ENCODE measurements at regions of chr11 and their contacts with region 1.

Region 1: DNA sequence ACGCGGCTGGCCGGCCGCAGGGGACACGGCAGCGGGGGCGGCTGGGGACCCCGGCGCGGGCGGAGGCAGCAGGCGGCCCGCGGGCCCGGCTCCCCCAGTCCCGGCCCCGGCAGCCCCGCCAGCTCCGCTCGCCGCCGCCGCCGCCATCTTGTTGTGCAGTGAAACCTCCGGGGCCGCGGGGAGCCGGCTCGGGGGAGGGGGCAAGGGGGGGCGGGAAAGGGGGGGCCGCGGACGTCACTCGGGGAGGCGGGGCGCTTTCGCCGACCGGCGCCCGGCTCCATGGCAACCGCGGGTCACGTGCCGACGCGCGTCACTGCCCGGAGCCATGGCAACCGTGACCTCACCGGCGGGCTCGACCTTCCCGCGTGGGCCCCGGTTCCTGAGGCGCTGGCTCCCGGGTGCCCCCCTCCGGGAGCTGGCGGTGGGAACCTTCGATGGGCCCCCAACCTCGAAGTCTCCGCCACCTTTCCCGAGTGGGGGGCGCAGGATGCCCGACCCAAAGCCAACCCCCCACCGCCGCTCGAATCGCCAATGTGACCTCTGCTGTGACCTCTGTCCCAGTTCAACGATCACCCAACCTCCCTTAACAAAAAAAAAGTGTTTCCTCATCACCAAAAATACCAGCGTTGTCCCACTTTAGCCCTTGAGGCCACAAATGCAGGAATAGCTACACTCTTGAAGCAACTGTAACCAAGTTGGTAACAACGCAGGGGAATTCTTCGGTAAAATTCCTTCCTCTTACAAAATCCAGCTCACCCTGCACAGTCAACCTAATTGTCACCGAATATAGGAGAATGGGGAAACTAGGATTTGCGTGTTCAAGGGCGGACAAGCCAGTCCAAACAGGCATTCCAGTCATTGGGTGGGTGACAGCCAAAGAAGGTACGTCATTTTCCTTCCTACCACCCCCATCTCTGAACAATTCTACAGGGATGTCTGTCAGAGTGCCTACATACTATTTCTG is at the start of gene SIK3:
- DNase-seq: peak; percentile 96 to 98
- ATAC-seq: peak; percentile 73 to 90 (median 84)
- H3K4me3 ChIP-seq: peak within 1 kb of the TSS; percentile 90
- H3K4me3 Mint-ChIP-seq: peak within 1 kb of the TSS; percentile 97
- H3K27ac ChIP-seq: peak within 1 kb of the TSS; percentile 94
- H3K27ac Mint-ChIP-seq: peak within 1 kb of the TSS; percentile 98
- H3K4me1 ChIP-seq: peaks cover 47% of the 10 kb centered on the region
- H3K4me1 Mint-ChIP-seq: peaks cover 64 to 65% of the 10 kb centered on the region in 2 donors
- H3K27me3 ChIP-seq: no peaks in the 10 kb centered on the region
- H3K27me3 Mint-ChIP-seq: no peaks in the 10 kb centered on the region
- CTCF ChIP-seq: peak; percentile 35
- total RNA-seq, gene SIK3: 71.6 to 120 (median 119) TPM

Region 2: GRCh38 chr11:116930177-116930576 is 168.4 kb before region 1 on chr11:
- intact Hi-C with region 1: loop called (anchors 2 kb)
- DNase-seq: peak in 1 of 2 donors; percentile 72
- ATAC-seq: peak; percentile 33 to 66 (median 61)
- H3K4me3 ChIP-seq: peak overlapping the region; percentile 15
- H3K4me3 Mint-ChIP-seq: peak overlapping the region; percentile 79
- H3K27ac ChIP-seq: peak overlapping the region; percentile 95
- H3K27ac Mint-ChIP-seq: peak overlapping the region; percentile 85 to 91
- H3K4me1 ChIP-seq: peaks cover 58% of the 10 kb centered on the region
- H3K4me1 Mint-ChIP-seq: peaks cover 72 to 83% of the 10 kb centered on the region in 2 donors
- H3K27me3 ChIP-seq: no peaks in the 10 kb centered on the region
- H3K27me3 Mint-ChIP-seq: no peaks in the 10 kb centered on the region
- CTCF ChIP-seq: no peak

Region 3: DNA sequence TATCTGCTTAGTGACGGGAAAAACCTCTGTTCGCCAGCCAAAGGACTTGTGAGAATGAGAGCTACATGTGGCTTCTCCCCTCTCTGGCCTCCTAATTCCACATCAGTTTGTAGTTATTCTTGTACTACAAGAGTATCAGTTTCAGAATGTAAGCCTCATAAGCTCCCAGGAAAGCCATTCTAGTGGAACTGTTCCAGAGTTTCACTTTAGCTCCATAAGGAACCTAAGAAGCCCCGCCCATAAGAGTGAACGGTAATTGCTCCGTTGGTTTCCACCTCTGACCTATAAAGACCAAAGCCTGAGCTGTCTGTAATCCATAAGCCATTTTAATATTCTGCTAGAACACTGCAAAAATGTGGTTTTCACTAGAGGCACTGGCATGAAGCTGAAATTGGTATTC is 53.4 kb before region 1 on chr11:
- intact Hi-C with region 1: loop called (anchors 10 kb)
- DNase-seq: no peak
- ATAC-seq: no peak
- H3K4me3 ChIP-seq: no peak overlapping the region
- H3K4me3 Mint-ChIP-seq: no peak overlapping the region
- H3K27ac ChIP-seq: no peak overlapping the region
- H3K27ac Mint-ChIP-seq: peak overlapping the region; percentile 20 to 67
- H3K4me1 ChIP-seq: peaks cover 3% of the 10 kb centered on the region
- H3K4me1 Mint-ChIP-seq: peaks cover 45 to 56% of the 10 kb centered on the region in 2 donors
- H3K27me3 ChIP-seq: no peaks in the 10 kb centered on the region
- H3K27me3 Mint-ChIP-seq: no peaks in the 10 kb centered on the region
- CTCF ChIP-seq: no peak

Region 4: GRCh38 chr11:117143871-117144476 is 45.4 kb after region 1 on chr11 and contains the start of gene PAFAH1B2:
- intact Hi-C with region 1: loop called (anchors 2 kb)
- DNase-seq: peak; percentile 90 to 97
- ATAC-seq: peak; percentile 87 to 96 (median 93)
- H3K4me3 ChIP-seq: peak within 1 kb of the TSS; percentile 74
- H3K4me3 Mint-ChIP-seq: peak within 1 kb of the TSS; percentile 100
- H3K27ac ChIP-seq: peak within 1 kb of the TSS; percentile 74
- H3K27ac Mint-ChIP-seq: peak within 1 kb of the TSS; percentile 89 to 93
- H3K4me1 ChIP-seq: peaks cover 24% of the 10 kb centered on the region
- H3K4me1 Mint-ChIP-seq: peaks cover 32 to 36% of the 10 kb centered on the region in 2 donors
- H3K27me3 ChIP-seq: no peaks in the 10 kb centered on the region
- H3K27me3 Mint-ChIP-seq: peaks cover 12 to 30% of the 10 kb centered on the region in 2 donors
- CTCF ChIP-seq: no peak
- total RNA-seq, gene PAFAH1B2: 46.1 to 71.0 (median 58.8) TPM

Region 5: DNA sequence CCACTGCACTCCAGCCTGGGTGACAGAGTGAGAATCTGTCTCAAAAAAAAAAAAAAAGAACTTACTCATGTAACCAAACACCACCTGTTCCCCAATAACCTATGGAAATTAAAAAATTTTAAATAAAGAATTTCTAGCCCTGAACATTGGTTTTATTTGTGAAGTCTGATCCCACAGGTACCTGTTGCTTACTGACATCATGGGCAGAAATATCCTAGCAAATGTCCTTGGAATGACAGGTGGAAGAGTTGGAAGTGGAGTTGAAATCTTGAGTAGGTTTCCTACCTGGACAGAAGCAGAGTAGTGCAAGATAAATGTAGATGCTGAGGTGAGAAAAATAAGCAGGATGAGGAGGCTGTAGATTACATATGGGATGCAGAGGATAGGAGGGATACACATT is 1226.7 kb after region 1 on chr11:
- intact Hi-C with region 1: no loop called
- DNase-seq: no peak
- ATAC-seq: no peak
- H3K4me3 ChIP-seq: no peak overlapping the region
- H3K4me3 Mint-ChIP-seq: no peak overlapping the region
- H3K27ac ChIP-seq: no peak overlapping the region
- H3K27ac Mint-ChIP-seq: no peak overlapping the region
- H3K4me1 ChIP-seq: peaks cover 21% of the 10 kb centered on the region
- H3K4me1 Mint-ChIP-seq: peaks cover 8 to 17% of the 10 kb centered on the region in 2 donors
- H3K27me3 ChIP-seq: no peaks in the 10 kb centered on the region
- H3K27me3 Mint-ChIP-seq: no peaks in the 10 kb centered on the region
- CTCF ChIP-seq: no peak